ENCODE measurements at regions of chr2 and their contacts with region 1.

Region 1: DNA sequence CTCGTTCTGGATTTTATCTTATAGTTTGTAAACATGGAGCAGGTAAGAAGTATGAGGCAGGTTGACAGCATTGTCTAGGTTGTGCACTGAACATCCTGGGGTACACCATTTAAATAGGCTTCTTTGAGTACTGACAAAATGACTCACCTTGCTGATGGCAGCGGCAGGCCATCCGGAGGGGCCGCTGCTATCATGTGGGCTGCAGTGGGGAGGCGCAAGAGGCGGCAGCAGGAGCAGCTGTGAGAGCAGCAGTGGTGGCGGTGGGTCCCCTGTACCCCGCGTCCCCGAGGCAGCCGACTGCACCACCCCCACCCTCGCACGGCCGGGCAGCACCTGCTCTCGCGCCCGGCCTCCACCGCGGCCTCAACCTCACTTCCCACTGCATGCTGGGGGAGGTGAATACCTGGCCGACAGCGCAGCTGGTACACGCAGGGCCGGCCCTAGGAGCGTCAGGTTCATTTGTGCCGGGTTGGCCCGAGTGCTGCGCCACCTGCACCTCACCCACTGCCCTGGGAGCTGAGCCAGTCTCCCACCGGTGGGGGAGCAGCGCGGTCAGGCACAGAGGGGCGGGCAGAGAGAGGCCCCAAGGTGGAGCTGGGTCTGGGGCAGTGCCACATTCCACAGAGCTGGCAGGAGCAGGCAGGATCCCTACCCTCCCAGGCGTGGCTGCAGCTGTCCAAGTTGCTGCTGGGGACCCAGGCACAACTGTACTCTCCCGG is 154.5 kb upstream of the RBMS1 start:
- DNase-seq: peak; percentile 56
- H3K4me3 Mint-ChIP-seq: peak overlapping the region; percentile 57
- H3K27ac Mint-ChIP-seq: peak overlapping the region; percentile 69
- H3K4me1 Mint-ChIP-seq: peaks cover 36% of the 10 kb centered on the region
- H3K27me3 Mint-ChIP-seq: no peaks in the 10 kb centered on the region
- CTCF ChIP-seq: no peak

Region 2: DNA sequence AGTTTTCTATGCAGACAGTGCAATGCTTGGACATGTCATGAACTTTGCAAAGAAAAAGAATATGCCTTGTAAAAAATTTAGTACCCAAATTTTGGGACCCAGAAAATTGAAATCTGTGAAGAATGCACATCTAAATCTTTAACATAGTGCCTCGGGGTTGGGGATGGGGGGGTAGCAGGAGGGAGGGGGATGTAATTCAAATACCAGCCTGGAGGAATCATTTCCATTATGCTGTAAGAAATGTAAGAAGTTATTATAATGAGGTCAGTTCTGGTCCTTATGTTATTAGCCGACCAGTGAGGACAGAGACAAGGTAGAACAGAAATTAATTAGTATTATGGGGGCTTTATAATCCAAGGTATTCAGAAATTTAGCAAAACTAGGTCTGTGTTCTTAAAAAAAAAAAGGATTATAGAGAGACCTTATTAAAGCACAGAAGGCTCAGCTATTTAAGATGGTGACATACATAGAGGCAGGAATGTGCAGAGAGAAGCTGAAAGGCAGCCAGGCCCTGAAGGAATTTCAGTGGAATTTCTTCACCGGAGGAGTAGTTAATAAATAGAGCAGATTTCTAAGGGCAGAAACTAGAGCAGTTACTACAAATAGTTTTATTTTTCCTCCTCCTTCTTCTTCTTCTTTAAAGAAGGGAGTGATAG is 65.5 kb before region 1 on chr2:
- CTCF ChIA-PET with region 1: interaction called, 10 read pairs
- POLR2A ChIA-PET with region 1: interaction called, 4 read pairs
- intact Hi-C with region 1: no loop called
- DNase-seq: peak; percentile 34
- H3K4me3 Mint-ChIP-seq: no peak overlapping the region
- H3K27ac Mint-ChIP-seq: peak overlapping the region; percentile 72
- H3K4me1 Mint-ChIP-seq: peaks cover 14% of the 10 kb centered on the region
- H3K27me3 Mint-ChIP-seq: no peaks in the 10 kb centered on the region
- CTCF ChIP-seq: no peak

Region 3: GRCh38 chr2:160666154-160667060 is 18.3 kb after region 1 on chr2:
- CTCF ChIA-PET with region 1: interaction called, 4 read pairs
- POLR2A ChIA-PET with region 1: interaction called, 12 read pairs
- intact Hi-C with region 1: no loop called
- DNase-seq: peak; percentile 95
- H3K4me3 Mint-ChIP-seq: peak overlapping the region; percentile 36
- H3K27ac Mint-ChIP-seq: peak overlapping the region; percentile 6
- H3K4me1 Mint-ChIP-seq: peaks cover 35% of the 10 kb centered on the region
- H3K27me3 Mint-ChIP-seq: no peaks in the 10 kb centered on the region
- CTCF ChIP-seq: no peak

Region 4: GRCh38 chr2:160695402-160696086 is 47.4 kb after region 1 on chr2:
- CTCF ChIA-PET with region 1: interaction called, 6 read pairs
- POLR2A ChIA-PET with region 1: interaction called, 12 read pairs
- intact Hi-C with region 1: no loop called
- DNase-seq: peak; percentile 84
- H3K4me3 Mint-ChIP-seq: no peak overlapping the region
- H3K27ac Mint-ChIP-seq: no peak overlapping the region
- H3K4me1 Mint-ChIP-seq: no peaks in the 10 kb centered on the region
- H3K27me3 Mint-ChIP-seq: no peaks in the 10 kb centered on the region
- CTCF ChIP-seq: no peak

Measured in MCF 10A (cell line).